ENCODE measurements at regions of chr1 and their contacts with region 1.

Region 1: GRCh38 chr1:48817505-48818114 is 40.9 kb upstream of the BEND5 start:
- DNase-seq: peak; percentile 11
- H3K4me3 ChIP-seq: no peak overlapping the region
- H3K27ac ChIP-seq: no peak overlapping the region
- H3K27me3 ChIP-seq: no peaks in the 10 kb centered on the region
- CTCF ChIP-seq: peak; percentile 83

Region 2: DNA sequence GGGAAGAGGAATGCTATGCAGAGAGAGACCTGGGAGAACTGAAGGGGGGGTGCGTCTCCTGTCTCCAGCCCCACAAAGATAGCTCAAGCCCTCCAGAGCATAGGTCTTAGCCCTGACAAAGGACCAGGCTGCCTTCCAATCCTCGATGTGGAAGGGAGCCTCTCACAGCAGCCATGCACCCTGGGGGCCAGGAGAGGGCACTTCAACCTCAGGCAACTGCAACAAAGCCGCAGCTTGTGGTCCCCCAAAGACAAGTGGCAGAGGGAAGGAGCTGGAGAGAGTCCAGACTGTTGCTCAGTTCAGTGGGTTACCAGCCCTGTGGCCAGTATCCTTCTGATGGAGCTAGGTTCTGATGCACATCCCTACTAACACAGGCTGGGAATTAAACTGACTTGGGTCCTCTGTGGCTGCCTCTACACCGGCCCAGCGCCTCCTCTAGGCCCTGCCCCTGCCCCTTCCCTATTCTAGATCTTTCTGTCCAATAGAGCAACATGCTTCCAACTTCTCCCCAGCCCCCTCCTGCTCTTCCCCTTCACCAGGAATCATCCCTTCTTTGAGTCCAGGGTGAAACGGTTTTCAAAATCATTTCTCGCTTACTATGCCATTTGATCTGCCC is 244.9 kb before region 1 on chr1:
- CTCF ChIA-PET with region 1: interaction called, 11 read pairs
- POLR2A ChIA-PET with region 1: no interaction called
- DNase-seq: no peak
- H3K4me3 ChIP-seq: no peak overlapping the region
- H3K27ac ChIP-seq: no peak overlapping the region
- H3K27me3 ChIP-seq: no peaks in the 10 kb centered on the region
- CTCF ChIP-seq: peak; percentile 50

Region 3: GRCh38 chr1:48776393-48777218 is 41.0 kb before region 1 on chr1 and contains the start of gene BEND5:
- CTCF ChIA-PET with region 1: no interaction called
- POLR2A ChIA-PET with region 1: no interaction called
- DNase-seq: peak; percentile 6
- H3K4me3 ChIP-seq: peak within 1 kb of the TSS; percentile 59
- H3K27ac ChIP-seq: no peak within 1 kb of the TSS
- H3K27me3 ChIP-seq: peaks cover 6% of the 10 kb centered on the region
- CTCF ChIP-seq: no peak
- polyA plus RNA-seq, gene BEND5: 0.74 and 1.2 TPM in 2 replicates

Measured in AG04450 (cell line).